A673 (cell line): ENCODE measurements at regions of chr12 and their contacts with region 1.

Region 1: GRCh38 chr12:66693901-66694675 is 15.2 kb upstream of the GRIP1 start:
- DNase-seq: peak; percentile 75
- H3K4me3 ChIP-seq: no peak overlapping the region
- H3K27ac ChIP-seq: no peak overlapping the region
- H3K4me1 ChIP-seq: no peaks in the 10 kb centered on the region
- H3K27me3 ChIP-seq: peaks cover 20% of the 10 kb centered on the region
- CTCF ChIP-seq: peak; percentile 70

Region 2: GRCh38 chr12:66144791-66145754 is 549.0 kb before region 1 on chr12:
- CTCF ChIA-PET with region 1: no interaction called
- POLR2A ChIA-PET with region 1: no interaction called
- intact Hi-C with region 1: loop called (anchors 10 kb)
- DNase-seq: peak; percentile 76
- H3K4me3 ChIP-seq: no peak overlapping the region
- H3K27ac ChIP-seq: peak overlapping the region; percentile 17
- H3K4me1 ChIP-seq: peaks cover 11% of the 10 kb centered on the region
- H3K27me3 ChIP-seq: no peaks in the 10 kb centered on the region
- CTCF ChIP-seq: peak; percentile 81

Region 3: DNA sequence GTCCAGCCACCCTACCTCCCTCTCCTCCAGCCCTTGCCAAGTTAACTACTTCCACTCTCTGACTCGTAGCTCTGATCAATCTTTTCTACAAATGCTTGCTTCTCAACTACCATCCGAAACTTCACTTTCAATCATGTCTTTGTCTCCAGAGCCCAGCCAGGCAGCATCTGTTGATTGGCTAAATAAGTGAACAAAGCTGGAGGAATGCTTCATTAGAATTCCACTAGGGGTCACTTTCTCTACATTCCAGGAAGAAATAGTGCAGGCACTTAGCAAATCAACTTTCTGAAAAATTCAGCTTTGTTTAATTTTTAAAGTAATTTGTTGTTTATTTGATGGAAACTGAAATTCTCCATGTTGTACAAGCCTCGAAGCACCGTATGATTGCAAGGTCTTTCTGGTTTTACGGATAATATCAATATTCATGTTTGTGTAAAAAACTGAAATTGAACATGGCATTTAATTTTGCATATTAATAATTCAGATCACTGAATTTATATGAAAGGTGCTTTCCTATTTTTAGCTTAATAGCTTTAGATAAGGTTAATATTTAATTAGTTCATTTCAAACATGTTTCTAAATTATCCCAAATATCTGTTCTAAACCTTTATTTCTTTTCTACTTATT is 424.2 kb before region 1 on chr12:
- CTCF ChIA-PET with region 1: no interaction called
- POLR2A ChIA-PET with region 1: no interaction called
- intact Hi-C with region 1: loop called (anchors 5 kb)
- DNase-seq: peak; percentile 67
- H3K4me3 ChIP-seq: no peak overlapping the region
- H3K27ac ChIP-seq: no peak overlapping the region
- H3K4me1 ChIP-seq: no peaks in the 10 kb centered on the region
- H3K27me3 ChIP-seq: no peaks in the 10 kb centered on the region
- CTCF ChIP-seq: peak; percentile 78

Region 4: DNA sequence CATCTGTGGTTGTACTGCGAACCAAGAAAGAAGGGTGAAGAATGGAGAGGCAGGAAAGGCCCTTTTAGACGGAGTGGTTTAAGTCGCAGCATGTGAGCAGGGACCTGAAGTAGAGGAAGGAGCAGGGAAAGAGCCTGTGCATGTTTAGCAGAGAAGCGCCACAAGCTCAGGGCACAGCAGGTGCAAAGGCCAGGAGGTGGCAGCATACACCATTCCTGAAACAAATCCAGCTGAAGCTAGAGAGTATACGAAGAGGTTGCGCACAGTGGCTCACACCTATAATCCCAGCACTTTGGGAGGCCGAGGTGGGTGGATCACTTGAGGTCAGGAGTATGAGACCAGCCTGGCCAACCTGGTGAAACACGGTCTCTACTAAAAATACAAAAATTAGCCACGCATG is 341.9 kb before region 1 on chr12:
- CTCF ChIA-PET with region 1: interaction called, 3 read pairs
- POLR2A ChIA-PET with region 1: no interaction called
- intact Hi-C with region 1: loop called (anchors 5 kb)
- DNase-seq: peak; percentile 34
- H3K4me3 ChIP-seq: no peak overlapping the region
- H3K27ac ChIP-seq: no peak overlapping the region
- H3K4me1 ChIP-seq: peaks cover 3% of the 10 kb centered on the region
- H3K27me3 ChIP-seq: no peaks in the 10 kb centered on the region
- CTCF ChIP-seq: peak; percentile 48

Region 5: GRCh38 chr12:66423266-66423665 is 270.8 kb before region 1 on chr12:
- CTCF ChIA-PET with region 1: no interaction called
- POLR2A ChIA-PET with region 1: no interaction called
- intact Hi-C with region 1: loop called (anchors 10 kb)
- DNase-seq: no peak
- H3K4me3 ChIP-seq: no peak overlapping the region
- H3K27ac ChIP-seq: no peak overlapping the region
- H3K4me1 ChIP-seq: no peaks in the 10 kb centered on the region
- H3K27me3 ChIP-seq: peaks cover 14% of the 10 kb centered on the region
- CTCF ChIP-seq: no peak

Region 6: DNA sequence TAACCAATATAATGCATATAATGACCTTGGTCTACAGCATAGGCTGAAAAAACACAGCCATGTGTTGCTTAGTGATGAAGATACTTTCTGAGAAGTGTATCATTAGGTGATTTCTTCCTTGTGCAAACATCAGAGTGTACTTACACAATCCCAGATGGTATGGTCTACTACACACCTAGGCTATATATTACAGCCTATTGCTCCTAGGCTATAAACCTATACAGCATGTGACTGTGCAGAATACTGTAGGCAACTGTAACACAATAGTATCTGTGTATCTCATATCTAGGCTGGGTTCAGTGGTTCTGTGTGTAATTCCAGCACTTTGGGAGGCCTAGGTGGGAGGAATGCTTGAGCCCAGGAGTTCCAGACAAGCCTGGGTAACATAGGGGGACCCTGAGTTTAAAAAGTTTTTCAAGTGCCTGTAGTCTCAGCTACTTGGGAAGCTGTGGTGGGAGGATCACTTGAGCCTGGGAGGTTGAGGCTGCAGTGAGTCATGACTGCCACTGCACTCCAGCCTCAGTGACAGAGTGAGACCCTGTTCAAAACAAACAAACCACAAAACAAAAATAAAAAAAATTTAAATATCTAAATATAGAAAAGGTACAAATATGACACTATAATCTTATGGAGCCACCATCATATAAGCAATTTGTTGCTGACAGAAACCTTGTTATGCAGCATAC is 81.9 kb before region 1 on chr12:
- CTCF ChIA-PET with region 1: no interaction called
- POLR2A ChIA-PET with region 1: no interaction called
- intact Hi-C with region 1: no loop called
- DNase-seq: no peak
- H3K4me3 ChIP-seq: no peak overlapping the region
- H3K27ac ChIP-seq: no peak overlapping the region
- H3K4me1 ChIP-seq: no peaks in the 10 kb centered on the region
- H3K27me3 ChIP-seq: peaks cover 78% of the 10 kb centered on the region
- CTCF ChIP-seq: no peak